ENCODE measurements at regions of chr1 and their contacts with region 1.

Region 1: DNA sequence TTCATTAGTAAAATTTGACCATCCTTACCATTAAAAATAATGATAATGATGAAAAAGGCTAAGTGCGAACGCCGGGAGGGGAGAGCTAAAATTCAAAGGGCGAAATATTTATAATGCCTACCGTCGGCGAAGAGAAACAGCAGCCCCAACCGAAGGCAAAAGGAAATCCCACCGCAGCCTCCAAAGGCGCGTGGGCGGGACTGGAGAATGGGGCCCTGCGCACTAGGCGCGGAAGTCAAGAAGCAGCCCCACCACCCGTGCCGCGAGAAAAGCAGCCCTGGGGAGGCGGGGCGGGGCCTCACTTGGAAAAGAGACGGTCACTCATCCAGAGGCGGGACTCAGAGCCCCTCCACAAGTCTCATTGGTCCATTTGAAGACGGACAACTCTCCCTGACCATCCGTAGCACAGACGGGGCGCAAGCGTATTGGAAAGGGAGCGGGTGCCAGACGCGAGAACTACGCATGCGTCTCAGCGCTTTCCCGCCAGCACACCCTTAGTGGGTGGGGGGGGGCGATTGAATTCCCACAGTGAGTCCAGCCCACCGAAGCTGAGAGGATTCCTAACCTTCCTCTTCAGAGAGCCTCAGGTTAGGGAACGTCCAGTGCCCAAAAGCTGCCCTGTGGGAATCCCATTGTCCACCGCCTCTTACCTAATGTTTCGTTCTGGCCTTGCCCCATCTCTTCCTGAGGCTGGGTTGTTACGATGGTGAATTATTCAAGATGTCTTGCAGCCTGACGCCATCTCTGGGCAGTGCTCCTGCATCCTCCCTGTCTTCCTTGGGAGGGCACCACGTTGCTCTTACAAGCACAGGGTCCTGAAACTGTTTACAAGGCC is 19.0 kb downstream of the MTX1 start:
- DNase-seq: peak; percentile 99
- ATAC-seq: peak; percentile 98
- H3K4me3 ChIP-seq: peak overlapping the region; percentile 37 to 57
- H3K27ac ChIP-seq: peak overlapping the region in 1 of 2 donors; percentile 83
- H3K4me1 ChIP-seq: peaks cover 5 to 8% of the 10 kb centered on the region in 2 donors
- H3K27me3 ChIP-seq: no peaks in the 10 kb centered on the region

Region 2: GRCh38 chr1:155050560-155051341 is 176.7 kb before region 1 on chr1 and contains the start of gene ADAM15:
- intact Hi-C with region 1: no loop called
- DNase-seq: peak; percentile 93 to 96
- ATAC-seq: peak; percentile 92
- H3K4me3 ChIP-seq: peak within 1 kb of the TSS; percentile 44 to 67
- H3K27ac ChIP-seq: peak within 1 kb of the TSS in 1 of 2 donors; percentile 65
- H3K4me1 ChIP-seq: no peaks in the 10 kb centered on the region
- H3K27me3 ChIP-seq: no peaks in the 10 kb centered on the region
- total RNA-seq, gene ADAM15: 129 to 180 TPM

Region 3: GRCh38 chr1:155176544-155177071 is 50.9 kb before region 1 on chr1:
- intact Hi-C with region 1: loop called in 1 of 2 experiments (anchors 5 kb)
- DNase-seq: peak; percentile 90 to 95
- ATAC-seq: peak; percentile 75
- H3K4me3 ChIP-seq: no peak overlapping the region
- H3K27ac ChIP-seq: no peak overlapping the region
- H3K4me1 ChIP-seq: no peaks in the 10 kb centered on the region
- H3K27me3 ChIP-seq: no peaks in the 10 kb centered on the region

Region 4: GRCh38 chr1:155208541-155209311 is 18.8 kb before region 1 on chr1 and contains the start of gene MTX1:
- intact Hi-C with region 1: loop called in 1 of 2 experiments (anchors 1 kb)
- DNase-seq: peak; percentile 96 to 98
- ATAC-seq: peak; percentile 93
- H3K4me3 ChIP-seq: peak within 1 kb of the TSS; percentile 34 to 60
- H3K27ac ChIP-seq: peak within 1 kb of the TSS; percentile 98 to 99
- H3K4me1 ChIP-seq: no peaks in the 10 kb centered on the region
- H3K27me3 ChIP-seq: no peaks in the 10 kb centered on the region
- total RNA-seq, gene MTX1: 20.3 to 21.3 TPM

Measured in aorta (tissue), 5 donors.